ENCODE measurements at regions of chr11 and their contacts with region 1.

Region 1: DNA sequence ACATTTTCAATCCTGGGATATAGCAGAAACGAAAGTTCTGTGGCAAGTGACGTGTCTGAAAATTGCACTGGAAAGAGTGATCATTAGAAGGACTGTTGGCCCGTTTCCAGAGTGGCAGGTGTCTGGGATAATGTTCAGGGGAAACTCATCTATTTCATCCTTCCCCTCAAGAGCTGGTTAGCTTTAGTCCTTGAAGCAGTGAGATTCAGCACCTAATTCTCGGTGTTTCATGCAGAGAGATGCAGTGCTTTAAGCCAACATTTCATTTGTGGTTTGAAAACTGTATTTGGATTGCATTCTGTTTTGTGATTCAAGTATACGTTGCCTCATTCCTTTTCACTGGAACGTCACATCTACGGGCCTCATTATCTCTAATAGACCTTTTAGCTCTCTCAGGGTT is 205.0 kb upstream of the RAG2 start:
- DNase-seq: no peak
- H3K4me3 Mint-ChIP-seq: no peak overlapping the region
- H3K27ac Mint-ChIP-seq: no peak overlapping the region
- H3K4me1 Mint-ChIP-seq: peaks cover 13% of the 10 kb centered on the region
- H3K27me3 Mint-ChIP-seq: no peaks in the 10 kb centered on the region
- CTCF ChIP-seq: no peak

Region 2: GRCh38 chr11:35237860-35238715 is 1565.0 kb before region 1 on chr11:
- CTCF ChIA-PET with region 1: no interaction called
- intact Hi-C with region 1: loop called (anchors 10 kb)
- DNase-seq: peak; percentile 32
- H3K4me3 Mint-ChIP-seq: no peak overlapping the region
- H3K27ac Mint-ChIP-seq: no peak overlapping the region
- H3K4me1 Mint-ChIP-seq: peaks cover 47% of the 10 kb centered on the region
- H3K27me3 Mint-ChIP-seq: no peaks in the 10 kb centered on the region
- CTCF ChIP-seq: peak; percentile 80

Measured in Calu3 (cell line).